Activated T-helper 1 cell treated with anti-CD3 and anti-CD28 coated beads, Interleukin-12 subunit alpha, Interleukin-12 subunit beta, Interleukin-2, Interleukin-4 antibody, amounts not matched to agents 30 ng/mL and 10 ng/mL and 1 ng/mL, durations not matched to agents 14 hours and 24 hours and 36 hours (primary cell): ENCODE measurements at regions of chr6 and their contacts with region 1.

Region 1: DNA sequence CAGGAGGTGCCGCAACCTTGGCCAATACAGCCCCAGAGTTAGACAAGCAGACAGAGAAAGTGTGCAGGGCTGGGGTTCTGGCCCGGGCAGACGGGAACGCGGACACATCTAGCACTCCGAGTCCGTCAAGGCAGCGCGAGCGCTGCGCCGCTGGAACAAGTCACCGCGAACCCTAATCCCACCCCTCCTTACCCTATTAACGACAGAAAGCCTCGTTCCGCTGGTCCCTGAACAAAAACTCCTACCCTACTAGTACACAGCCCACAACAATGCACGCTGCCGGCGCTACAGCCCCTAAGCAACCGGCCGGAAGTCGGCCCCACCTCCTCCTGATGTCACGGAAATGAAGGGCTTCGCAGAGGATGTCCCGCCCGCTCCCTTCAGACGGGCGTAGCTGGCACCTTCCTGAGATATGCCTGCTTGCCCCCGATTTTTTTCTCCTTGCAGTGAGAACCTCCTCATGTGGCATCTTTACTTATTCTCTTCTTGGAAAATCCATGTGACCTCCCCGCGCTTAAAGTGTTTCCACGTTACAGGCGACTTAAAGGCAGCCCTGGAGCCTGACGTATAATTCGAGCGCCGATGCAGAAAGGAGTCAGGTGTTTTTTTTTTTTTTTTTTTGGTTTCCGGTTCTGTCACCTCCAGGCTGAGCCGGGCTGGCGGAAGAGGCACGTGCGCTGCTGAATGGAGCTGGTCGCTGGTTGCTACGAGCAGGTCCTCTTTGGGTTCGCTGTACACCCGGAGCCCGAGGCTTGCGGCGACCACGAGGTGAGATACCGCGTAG is at the starts of genes C6orf52 and PAK1IP1:
- DNase-seq: peak; percentile 90
- H3K4me3 Mint-ChIP-seq: peak within 1 kb of the TSS; percentile 91
- H3K27ac Mint-ChIP-seq: peak within 1 kb of the TSS; percentile 99
- H3K4me1 Mint-ChIP-seq: peaks cover 49% of the 10 kb centered on the region
- H3K27me3 Mint-ChIP-seq: peaks cover 3% of the 10 kb centered on the region
- total RNA-seq, gene C6orf52: 3.6 and 6.0 TPM in 2 replicates
- total RNA-seq, gene PAK1IP1: 35.3 and 37.4 TPM in 2 replicates

Region 2: DNA sequence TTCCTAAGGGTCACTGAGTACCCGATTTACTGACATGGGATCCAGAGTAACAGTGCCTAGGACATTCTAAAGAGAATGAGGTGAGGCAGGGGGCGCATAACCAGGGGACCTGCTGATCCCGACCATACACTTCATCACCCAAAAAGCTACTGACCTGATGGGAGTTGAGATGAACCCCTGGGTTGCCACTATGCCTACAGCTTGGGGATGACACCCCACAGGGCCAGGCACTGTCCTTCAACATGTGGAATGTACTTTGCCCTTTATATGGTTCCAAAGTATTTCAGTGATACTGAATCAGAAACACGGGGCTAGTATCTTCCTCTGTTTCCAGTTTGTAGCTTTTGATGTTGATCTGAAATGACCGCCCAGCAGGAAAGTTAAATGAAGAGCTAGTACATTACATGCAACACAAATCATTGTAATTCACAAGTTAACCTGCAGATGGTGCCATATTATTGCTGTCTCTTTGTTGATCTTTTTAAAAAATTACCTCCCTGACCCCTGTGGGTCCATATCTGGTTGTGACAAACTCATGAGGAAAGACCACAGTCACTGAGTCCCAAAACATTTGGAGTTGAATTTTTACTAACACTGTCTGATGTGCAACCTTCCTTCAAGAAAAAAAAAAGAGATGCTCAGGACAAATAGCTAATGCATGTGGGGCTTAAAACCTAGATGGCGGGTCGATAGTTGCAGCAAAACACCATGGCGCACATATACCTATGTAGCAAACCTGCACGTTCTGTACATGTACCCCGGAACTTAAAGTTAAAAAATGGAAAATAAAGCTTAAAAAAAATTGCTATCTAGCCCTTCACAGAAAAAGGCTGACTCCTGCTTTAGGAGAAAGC is 216.1 kb before region 1 on chr6:
- intact Hi-C with region 1: loop called (anchors 1 kb)
- DNase-seq: no peak
- H3K4me3 Mint-ChIP-seq: no peak overlapping the region
- H3K27ac Mint-ChIP-seq: no peak overlapping the region
- H3K4me1 Mint-ChIP-seq: no peaks in the 10 kb centered on the region
- H3K27me3 Mint-ChIP-seq: peaks cover 13% of the 10 kb centered on the region

Region 3: GRCh38 chr6:10528170-10528981 is 166.1 kb before region 1 on chr6:
- intact Hi-C with region 1: loop called (anchors 1 kb)
- DNase-seq: peak; percentile 41
- H3K4me3 Mint-ChIP-seq: peak overlapping the region; percentile 87
- H3K27ac Mint-ChIP-seq: peak overlapping the region; percentile 64
- H3K4me1 Mint-ChIP-seq: peaks cover 48% of the 10 kb centered on the region
- H3K27me3 Mint-ChIP-seq: peaks cover 5% of the 10 kb centered on the region

Region 4: DNA sequence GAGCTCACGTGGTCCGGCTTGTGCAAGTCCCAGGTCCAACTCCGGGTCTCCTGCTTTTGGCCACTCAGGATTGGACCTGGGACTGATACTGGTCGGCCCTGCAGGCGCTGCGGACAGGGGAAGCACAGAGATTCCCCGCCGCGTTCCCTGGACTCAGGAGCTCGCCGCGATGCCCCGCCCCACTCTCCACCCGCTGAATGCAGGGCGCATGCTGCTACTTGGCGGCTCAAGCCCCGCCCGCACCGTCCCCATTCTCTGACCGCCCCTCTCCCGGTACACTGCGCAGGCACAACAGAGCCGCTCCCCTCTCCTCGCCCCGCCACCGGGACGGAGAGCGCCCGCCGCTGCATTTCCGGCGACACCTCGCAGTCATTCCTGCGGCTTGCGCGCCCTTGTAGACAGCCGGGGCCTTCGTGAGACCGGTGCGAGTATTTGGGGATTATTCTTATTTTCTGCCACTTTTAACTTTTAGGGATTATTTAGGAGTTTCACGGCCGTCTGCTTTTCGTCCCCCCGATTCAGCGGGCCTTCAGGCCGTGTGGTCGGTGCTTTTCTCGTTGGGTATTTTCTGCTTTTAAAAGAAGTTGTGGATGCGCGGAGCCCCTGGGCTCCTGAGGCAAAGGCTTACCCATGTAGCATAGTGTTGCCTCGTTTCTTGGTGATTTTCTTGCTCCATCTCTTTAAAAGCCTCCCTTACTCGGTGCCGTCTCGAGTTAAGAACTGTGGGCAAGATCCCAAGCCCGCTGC is 28.5 kb after region 1 on chr6 and contains the start of gene TMEM14C:
- intact Hi-C with region 1: loop called (anchors 1 kb)
- DNase-seq: peak; percentile 88
- H3K4me3 Mint-ChIP-seq: peak within 1 kb of the TSS; percentile 91
- H3K27ac Mint-ChIP-seq: peak within 1 kb of the TSS; percentile 93
- H3K4me1 Mint-ChIP-seq: peaks cover 55% of the 10 kb centered on the region
- H3K27me3 Mint-ChIP-seq: no peaks in the 10 kb centered on the region
- total RNA-seq, gene TMEM14C: 57.3 and 63.1 TPM in 2 replicates

Region 5: GRCh38 chr6:10800829-10801535 is 106.5 kb after region 1 on chr6:
- intact Hi-C with region 1: loop called (anchors 1 kb)
- DNase-seq: peak; percentile 48
- H3K4me3 Mint-ChIP-seq: no peak overlapping the region
- H3K27ac Mint-ChIP-seq: no peak overlapping the region
- H3K4me1 Mint-ChIP-seq: no peaks in the 10 kb centered on the region
- H3K27me3 Mint-ChIP-seq: no peaks in the 10 kb centered on the region

Region 6: GRCh38 chr6:11374036-11375010 is 679.8 kb after region 1 on chr6:
- intact Hi-C with region 1: no loop called
- DNase-seq: no peak
- H3K4me3 Mint-ChIP-seq: peak overlapping the region; percentile 65
- H3K27ac Mint-ChIP-seq: peak overlapping the region; percentile 94
- H3K4me1 Mint-ChIP-seq: peaks cover 72% of the 10 kb centered on the region
- H3K27me3 Mint-ChIP-seq: no peaks in the 10 kb centered on the region